A673 (cell line): ENCODE measurements at regions of chr3 and their contacts with region 1.

Region 1: GRCh38 chr3:45938864-45939263 is 4.4 kb upstream of the CXCR6 start:
- DNase-seq: peak; percentile 72
- H3K4me3 ChIP-seq: no peak overlapping the region
- H3K27ac ChIP-seq: no peak overlapping the region
- H3K4me1 ChIP-seq: no peaks in the 10 kb centered on the region
- H3K27me3 ChIP-seq: no peaks in the 10 kb centered on the region
- CTCF ChIP-seq: peak; percentile 71

Region 2: GRCh38 chr3:46078712-46079400 is 140.0 kb after region 1 on chr3:
- CTCF ChIA-PET with region 1: interaction called, 17 read pairs
- POLR2A ChIA-PET with region 1: no interaction called
- intact Hi-C with region 1: loop called (anchors 2 kb)
- DNase-seq: peak; percentile 83
- H3K4me3 ChIP-seq: no peak overlapping the region
- H3K27ac ChIP-seq: no peak overlapping the region
- H3K4me1 ChIP-seq: no peaks in the 10 kb centered on the region
- H3K27me3 ChIP-seq: no peaks in the 10 kb centered on the region
- CTCF ChIP-seq: peak; percentile 86

Region 3: GRCh38 chr3:46222435-46223161 is 283.7 kb after region 1 on chr3:
- CTCF ChIA-PET with region 1: no interaction called
- POLR2A ChIA-PET with region 1: no interaction called
- intact Hi-C with region 1: no loop called
- DNase-seq: no peak
- H3K4me3 ChIP-seq: no peak overlapping the region
- H3K27ac ChIP-seq: no peak overlapping the region
- H3K4me1 ChIP-seq: no peaks in the 10 kb centered on the region
- H3K27me3 ChIP-seq: no peaks in the 10 kb centered on the region
- CTCF ChIP-seq: no peak